GM18951 (cell line): ENCODE measurements at regions of chr11 and their contacts with region 1.

Region 1: DNA sequence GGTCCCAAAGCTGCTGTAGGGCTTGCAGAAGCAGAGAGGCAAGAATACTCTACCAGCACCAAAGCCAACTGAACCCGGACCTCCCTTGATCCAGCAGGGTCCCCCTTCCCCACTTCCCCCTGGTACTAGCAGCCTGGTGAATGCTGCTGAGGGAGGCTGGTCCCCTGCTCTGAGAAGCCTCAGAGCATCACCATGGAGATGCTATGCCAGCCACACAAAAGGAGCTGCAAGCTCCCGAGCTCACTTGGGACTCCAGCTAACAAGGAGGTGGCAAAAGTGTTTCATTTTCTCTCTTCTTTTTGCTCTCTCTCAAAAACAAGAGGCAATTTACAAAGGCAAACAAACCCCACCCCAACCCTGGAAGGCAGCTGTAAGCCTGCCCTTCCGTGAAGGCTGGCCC is 509.8 kb downstream of the BUD13 start:
- POLR2A ChIP-seq: no peak

Region 2: DNA sequence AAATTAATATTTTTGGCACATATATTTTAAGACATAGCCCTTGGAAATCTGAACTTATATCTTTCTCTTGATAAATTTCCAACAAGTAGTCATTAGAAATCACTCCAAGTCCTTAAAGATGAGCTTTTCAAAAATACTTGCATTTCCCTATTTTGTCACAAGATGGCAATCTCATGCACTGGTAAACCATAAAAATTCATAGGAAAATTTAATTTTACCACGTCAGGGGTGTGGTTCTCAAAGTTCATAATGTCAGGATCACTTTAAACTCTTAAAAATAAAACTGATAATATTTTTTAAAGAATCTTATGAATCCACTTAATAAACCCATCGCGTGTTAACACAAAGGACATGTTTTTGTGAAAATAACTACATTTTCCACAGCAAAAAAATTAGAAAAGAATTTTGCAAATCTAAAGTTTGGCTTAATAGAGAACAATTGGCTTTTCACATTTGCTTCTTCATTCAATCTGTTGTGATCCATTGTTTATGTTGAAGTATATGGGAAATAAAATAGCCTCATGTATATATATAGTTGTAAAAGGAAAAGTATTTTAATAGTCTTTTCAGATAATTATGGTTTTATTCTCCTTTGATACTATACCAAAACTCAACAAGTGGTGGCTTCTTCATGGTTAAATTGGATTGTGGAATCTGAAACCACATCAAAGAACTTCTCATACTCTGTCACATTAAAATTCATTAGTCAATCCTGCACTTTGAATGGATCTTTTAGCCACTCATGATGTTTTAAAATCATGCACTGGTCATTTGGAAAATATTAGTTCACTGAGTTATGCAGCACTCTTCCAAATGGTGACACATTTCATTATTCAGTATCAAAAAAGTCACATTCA is 927.9 kb before region 1 on chr11:
- in situ Hi-C with region 1: loop called (anchors 10 kb)
- POLR2A ChIP-seq: no peak

Region 3: DNA sequence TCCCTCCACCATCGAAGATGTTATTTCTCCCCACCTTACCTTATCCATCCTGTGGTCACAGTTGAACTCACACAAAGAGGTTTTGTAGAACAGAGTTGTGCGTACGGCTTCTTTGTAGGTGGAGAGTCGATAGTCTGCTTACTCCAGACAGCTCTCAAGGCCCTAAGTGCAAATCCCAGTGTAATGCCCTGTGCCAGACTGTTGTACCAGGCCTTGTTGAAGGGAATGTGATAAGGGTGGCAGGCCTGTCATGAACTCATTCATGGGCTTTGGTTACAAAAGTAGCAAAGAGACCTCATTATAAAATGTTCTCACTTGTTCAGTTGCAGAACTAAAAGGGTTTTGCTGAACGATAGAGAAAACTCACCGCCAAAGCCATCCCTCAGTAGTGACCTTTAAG is 470.1 kb before region 1 on chr11:
- in situ Hi-C with region 1: no loop called
- POLR2A ChIP-seq: no peak

Region 4: GRCh38 chr11:116148056-116148455 is 115.0 kb before region 1 on chr11:
- in situ Hi-C with region 1: no loop called
- POLR2A ChIP-seq: no peak